ENCODE measurements at regions of chr7 and their contacts with region 1.

Region 1: GRCh38 chr7:75054744-75055143 is 18.9 kb downstream of the RCC1L start:
- DNase-seq: no peak
- ATAC-seq: no peak
- H3K4me3 ChIP-seq: no peak overlapping the region
- H3K27ac ChIP-seq: no peak overlapping the region
- H3K4me1 ChIP-seq: no peaks in the 10 kb centered on the region
- H3K27me3 ChIP-seq: no peaks in the 10 kb centered on the region
- CTCF ChIP-seq: no peak
- EP300 ChIP-seq: no peak
- POLR2A ChIP-seq: no peak
- RAD21 ChIP-seq: no peak

Region 2: GRCh38 chr7:75028299-75028698 is 26.4 kb before region 1 on chr7:
- CTCF ChIA-PET with region 1: no interaction called
- POLR2A ChIA-PET with region 1: no interaction called
- RAD21 ChIA-PET with region 1: no interaction called
- SMC1A ChIA-PET with region 1: no interaction called
- in situ Hi-C with region 1: no loop called
- intact Hi-C with region 1: no loop called
- DNase-seq: no peak
- ATAC-seq: no peak
- H3K4me3 ChIP-seq: no peak overlapping the region
- H3K27ac ChIP-seq: no peak overlapping the region
- H3K4me1 ChIP-seq: no peaks in the 10 kb centered on the region
- H3K27me3 ChIP-seq: no peaks in the 10 kb centered on the region
- CTCF ChIP-seq: no peak
- EP300 ChIP-seq: no peak
- POLR2A ChIP-seq: no peak
- RAD21 ChIP-seq: no peak

Region 3: GRCh38 chr7:75038553-75038952 is 16.2 kb before region 1 on chr7:
- CTCF ChIA-PET with region 1: no interaction called
- POLR2A ChIA-PET with region 1: no interaction called
- RAD21 ChIA-PET with region 1: no interaction called
- SMC1A ChIA-PET with region 1: no interaction called
- in situ Hi-C with region 1: no loop called
- intact Hi-C with region 1: no loop called
- DNase-seq: no peak
- ATAC-seq: peak; percentile 35
- H3K4me3 ChIP-seq: no peak overlapping the region
- H3K27ac ChIP-seq: no peak overlapping the region
- H3K4me1 ChIP-seq: no peaks in the 10 kb centered on the region
- H3K27me3 ChIP-seq: no peaks in the 10 kb centered on the region
- CTCF ChIP-seq: no peak
- EP300 ChIP-seq: no peak
- POLR2A ChIP-seq: peak; percentile 20; the same call in 1 of the 2 replicates
- RAD21 ChIP-seq: no peak

Region 4: GRCh38 chr7:76047811-76048667 is 993.3 kb after region 1 on chr7 and contains the starts of genes MDH2 and STYXL1:
- CTCF ChIA-PET with region 1: no interaction called
- POLR2A ChIA-PET with region 1: no interaction called
- RAD21 ChIA-PET with region 1: no interaction called
- SMC1A ChIA-PET with region 1: no interaction called
- in situ Hi-C with region 1: loop called (anchors 25 kb)
- intact Hi-C with region 1: no loop called
- DNase-seq: peak; percentile 82
- ATAC-seq: peak; percentile 97
- H3K4me3 ChIP-seq: peak within 1 kb of the TSS; percentile 96
- H3K27ac ChIP-seq: peak within 1 kb of the TSS; percentile 81
- H3K4me1 ChIP-seq: peaks cover 7% of the 10 kb centered on the region
- H3K27me3 ChIP-seq: no peaks in the 10 kb centered on the region
- CTCF ChIP-seq: no peak
- EP300 ChIP-seq: no peak
- POLR2A ChIP-seq: peak; percentile 98
- RAD21 ChIP-seq: no peak
- polyA plus RNA-seq, gene MDH2: 106 to 131 TPM
- polyA plus RNA-seq, gene STYXL1: 18.4 to 33.3 TPM